ENCODE measurements at regions of chr1 and their contacts with region 1.

Region 1: GRCh38 chr1:2044510-2045319 is 5.5 kb upstream of the PRKCZ start:
- DNase-seq: peak; percentile 77
- ATAC-seq: peak; percentile 87
- H3K4me3 Mint-ChIP-seq: peak overlapping the region; percentile 42
- H3K27ac Mint-ChIP-seq: no peak overlapping the region
- H3K4me1 Mint-ChIP-seq: peaks cover 24% of the 10 kb centered on the region
- H3K27me3 Mint-ChIP-seq: peaks cover 12% of the 10 kb centered on the region

Region 2: GRCh38 chr1:1943834-1944570 is 100.7 kb before region 1 on chr1:
- CTCF ChIA-PET with region 1: interaction called, 21 read pairs
- POLR2A ChIA-PET with region 1: interaction called, 3 read pairs
- DNase-seq: peak; percentile 71
- ATAC-seq: peak; percentile 98
- H3K4me3 Mint-ChIP-seq: no peak overlapping the region
- H3K27ac Mint-ChIP-seq: peak overlapping the region; percentile 60
- H3K4me1 Mint-ChIP-seq: peaks cover 4% of the 10 kb centered on the region
- H3K27me3 Mint-ChIP-seq: peaks cover 3% of the 10 kb centered on the region

Region 3: DNA sequence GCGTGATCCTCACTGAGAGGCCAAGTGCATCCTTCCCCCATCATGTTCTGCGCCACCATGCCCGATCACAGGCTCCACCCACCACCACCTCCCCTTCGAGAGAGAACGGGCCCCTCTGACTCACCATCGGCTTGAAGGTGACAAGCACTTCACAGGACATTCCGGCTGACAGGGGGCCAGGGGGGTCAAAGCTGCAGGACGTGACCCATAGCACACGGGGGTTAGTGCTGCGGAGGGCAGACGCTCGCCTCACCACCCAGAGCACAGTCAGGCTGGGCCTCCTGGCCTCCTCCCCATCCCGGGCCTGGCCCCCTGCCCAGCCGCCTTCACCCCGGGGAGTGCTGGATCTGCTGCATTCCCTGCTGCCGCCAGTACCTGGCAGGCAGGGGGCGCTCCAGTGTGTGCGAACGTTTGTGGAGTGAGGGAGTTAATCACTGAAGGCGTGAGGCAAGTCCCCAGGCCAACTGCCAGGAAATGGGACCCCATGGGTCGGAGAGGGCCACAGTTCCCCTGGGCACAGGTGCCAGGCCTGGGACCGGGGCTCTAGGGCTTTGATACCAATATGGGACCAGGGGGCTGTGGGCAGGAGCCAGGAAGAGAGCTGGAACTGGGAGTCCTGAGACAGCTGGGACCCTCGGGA is 84.8 kb before region 1 on chr1:
- CTCF ChIA-PET with region 1: interaction called, 100 read pairs
- POLR2A ChIA-PET with region 1: no interaction called
- DNase-seq: peak; percentile 82
- ATAC-seq: peak; percentile 92
- H3K4me3 Mint-ChIP-seq: no peak overlapping the region
- H3K27ac Mint-ChIP-seq: no peak overlapping the region
- H3K4me1 Mint-ChIP-seq: peaks cover under 1% of the 10 kb centered on the region
- H3K27me3 Mint-ChIP-seq: peaks cover 5% of the 10 kb centered on the region

Region 4: GRCh38 chr1:1989102-1989542 is 55.6 kb before region 1 on chr1:
- CTCF ChIA-PET with region 1: interaction called, 13 read pairs
- POLR2A ChIA-PET with region 1: no interaction called
- DNase-seq: no peak
- ATAC-seq: no peak
- H3K4me3 Mint-ChIP-seq: no peak overlapping the region
- H3K27ac Mint-ChIP-seq: no peak overlapping the region
- H3K4me1 Mint-ChIP-seq: no peaks in the 10 kb centered on the region
- H3K27me3 Mint-ChIP-seq: peaks cover 2% of the 10 kb centered on the region

Region 5: DNA sequence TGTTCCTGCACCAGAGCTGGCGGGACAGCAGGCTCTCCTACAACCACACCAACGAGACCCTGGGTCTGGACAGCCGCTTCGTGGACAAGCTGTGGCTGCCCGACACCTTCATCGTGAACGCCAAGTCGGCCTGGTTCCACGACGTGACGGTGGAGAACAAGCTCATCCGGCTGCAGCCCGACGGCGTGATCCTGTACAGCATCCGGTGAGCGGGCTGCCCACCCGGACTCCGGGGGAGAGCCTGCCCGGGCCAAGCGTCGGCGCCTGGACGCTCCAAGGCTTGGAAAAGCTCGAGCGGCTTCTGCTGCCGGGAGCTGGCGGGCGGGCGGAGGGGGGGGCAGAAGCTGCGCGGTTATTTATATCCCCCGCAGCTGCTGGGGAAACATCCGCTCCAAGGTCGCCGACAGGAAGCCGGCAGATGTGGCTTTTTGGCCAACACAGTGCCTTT is 19.2 kb before region 1 on chr1:
- CTCF ChIA-PET with region 1: interaction called, 13 read pairs
- POLR2A ChIA-PET with region 1: no interaction called
- DNase-seq: peak; percentile 55
- ATAC-seq: peak; percentile 54
- H3K4me3 Mint-ChIP-seq: no peak overlapping the region
- H3K27ac Mint-ChIP-seq: peak overlapping the region; percentile 30
- H3K4me1 Mint-ChIP-seq: peaks cover 6% of the 10 kb centered on the region
- H3K27me3 Mint-ChIP-seq: peaks cover 12% of the 10 kb centered on the region

Region 6: GRCh38 chr1:2104621-2105513 is 60.2 kb after region 1 on chr1:
- CTCF ChIA-PET with region 1: no interaction called
- POLR2A ChIA-PET with region 1: no interaction called
- DNase-seq: no peak
- ATAC-seq: no peak
- H3K4me3 Mint-ChIP-seq: no peak overlapping the region
- H3K27ac Mint-ChIP-seq: no peak overlapping the region
- H3K4me1 Mint-ChIP-seq: no peaks in the 10 kb centered on the region
- H3K27me3 Mint-ChIP-seq: no peaks in the 10 kb centered on the region

Region 7: DNA sequence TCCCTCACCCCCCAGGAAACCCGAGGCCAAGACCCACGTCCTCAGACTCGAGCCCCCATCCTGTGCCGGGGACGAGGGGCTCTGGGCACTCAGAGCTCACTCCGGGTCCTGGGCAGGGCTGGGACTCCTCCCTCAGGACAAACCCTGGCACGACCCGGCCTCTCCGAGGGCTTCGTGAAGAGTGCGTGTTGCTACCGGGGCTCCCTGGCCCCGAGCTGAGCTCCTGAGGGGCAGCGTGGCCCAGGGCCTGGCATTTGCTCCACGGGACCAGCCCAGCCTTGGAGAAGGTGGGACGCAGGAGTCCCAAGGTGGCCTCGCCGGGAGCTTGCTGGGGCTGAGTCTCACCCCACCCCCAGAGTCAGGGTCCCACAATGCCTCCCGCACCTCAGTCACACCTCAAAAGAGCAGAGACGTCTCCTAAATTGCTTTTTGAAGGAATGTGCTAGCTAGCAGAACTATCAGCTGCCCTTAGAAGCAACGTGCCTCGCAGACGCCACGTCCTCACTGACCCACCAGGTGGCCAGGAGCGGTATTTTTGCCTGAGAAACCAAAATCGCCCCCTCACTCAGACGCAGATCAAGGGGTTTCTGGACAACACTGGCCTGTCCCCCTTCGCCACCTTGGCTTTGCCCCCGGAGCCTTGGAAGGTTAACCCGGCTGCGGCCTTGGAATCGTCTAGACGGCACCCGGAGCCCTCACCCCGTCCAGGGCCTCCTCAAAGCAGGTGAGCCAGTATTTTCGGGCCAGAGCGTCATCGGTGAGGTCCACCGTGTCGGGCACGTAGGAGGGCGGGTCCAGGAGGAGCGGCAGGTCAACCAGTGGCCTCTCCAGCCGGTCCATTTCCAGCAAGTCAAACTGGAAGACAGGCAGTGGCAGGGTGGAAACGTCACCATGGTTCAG is 470.4 kb after region 1 on chr1:
- CTCF ChIA-PET with region 1: no interaction called
- POLR2A ChIA-PET with region 1: no interaction called
- DNase-seq: no peak
- ATAC-seq: no peak
- H3K4me3 Mint-ChIP-seq: no peak overlapping the region
- H3K27ac Mint-ChIP-seq: no peak overlapping the region
- H3K4me1 Mint-ChIP-seq: no peaks in the 10 kb centered on the region
- H3K27me3 Mint-ChIP-seq: no peaks in the 10 kb centered on the region

Measured in activated CD8-positive, alpha-beta T cell treated with anti-CD3 and anti-CD28 coated beads, Interleukin-2, amount 10 ng/mL, durations not matched to agents 7 days and 5 days (primary cell).